ENCODE measurements at regions of chr20 and their contacts with region 1.

Region 1: DNA sequence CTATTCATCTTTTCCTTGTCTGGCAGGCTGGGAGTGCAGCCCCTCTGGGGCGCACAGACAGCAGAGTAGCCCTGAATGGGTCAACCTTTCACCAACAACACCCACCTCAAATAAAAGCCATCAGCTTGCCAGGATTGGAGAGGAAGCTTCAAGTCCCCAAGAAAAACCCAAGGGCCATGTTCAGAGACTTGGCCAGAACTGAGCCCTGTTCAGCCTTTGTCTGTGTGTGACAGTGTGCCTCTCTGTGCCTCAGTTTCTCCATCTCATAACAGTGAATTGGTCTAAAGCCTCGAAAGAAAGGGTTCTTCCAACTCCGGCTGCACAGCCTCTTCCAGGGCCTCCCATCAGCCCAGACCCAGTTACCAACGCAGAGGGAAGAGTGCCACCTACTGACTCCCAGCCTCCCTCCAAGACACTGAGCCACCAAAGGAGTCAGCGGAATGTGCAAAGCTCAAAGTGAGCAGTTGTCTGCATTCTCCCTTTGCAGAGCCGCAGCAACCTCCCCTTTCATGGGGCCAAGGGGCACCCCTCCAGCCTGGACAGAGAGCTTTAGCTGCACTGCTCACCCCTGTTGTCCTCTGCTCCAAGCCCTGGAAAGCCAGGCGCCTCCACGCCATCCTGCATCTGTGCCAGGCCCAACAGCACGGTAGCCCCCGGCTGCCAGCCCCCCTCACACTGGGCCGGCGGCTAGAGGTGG is 82.7 kb upstream of the TOP1 start:
- DNase-seq: peak; percentile 14 to 35 (median 34)
- H3K4me3 ChIP-seq: no peak overlapping the region
- H3K4me3 Mint-ChIP-seq: no peak overlapping the region
- H3K27ac ChIP-seq: no peak overlapping the region
- H3K27ac Mint-ChIP-seq: no peak overlapping the region
- H3K4me1 ChIP-seq: peaks cover 22 to 27% of the 10 kb centered on the region in 2 donors
- H3K4me1 Mint-ChIP-seq: peaks cover 34% of the 10 kb centered on the region
- H3K27me3 ChIP-seq: no peaks in the 10 kb centered on the region
- H3K27me3 Mint-ChIP-seq: peaks cover 0 to 4% (median 3%) of the 10 kb centered on the region in 3 donors
- CTCF ChIP-seq: peak; percentile 35

Region 2: DNA sequence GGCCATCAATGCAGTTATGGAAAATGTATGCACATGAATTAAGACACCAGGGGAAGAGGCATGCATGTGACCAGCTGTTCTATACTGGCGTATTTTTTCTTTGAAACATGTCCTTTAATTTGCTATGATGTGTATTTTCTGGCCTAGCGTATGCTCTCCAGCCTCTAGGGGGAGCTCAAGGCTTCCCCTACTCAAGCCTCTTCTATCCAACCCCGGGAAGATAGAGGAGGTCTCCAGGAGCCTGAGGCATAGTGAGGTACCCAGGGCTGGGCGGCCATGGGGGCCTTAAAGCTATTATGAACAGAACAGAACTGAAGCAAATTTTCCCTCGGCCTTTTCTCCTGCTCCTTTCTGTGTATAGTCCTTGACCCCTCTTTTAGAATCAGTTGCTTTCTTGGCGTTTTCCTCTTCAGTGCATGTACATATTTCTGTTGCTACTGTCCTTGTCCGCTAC is 785.8 kb before region 1 on chr20:
- intact Hi-C with region 1: loop called in 1 of 2 experiments (anchors 10 kb)
- DNase-seq: peak; percentile 49 to 65 (median 61)
- H3K4me3 ChIP-seq: no peak overlapping the region
- H3K4me3 Mint-ChIP-seq: no peak overlapping the region
- H3K27ac ChIP-seq: no peak overlapping the region
- H3K27ac Mint-ChIP-seq: no peak overlapping the region
- H3K4me1 ChIP-seq: no peaks in the 10 kb centered on the region
- H3K4me1 Mint-ChIP-seq: no peaks in the 10 kb centered on the region
- H3K27me3 ChIP-seq: peaks cover 5 to 6% of the 10 kb centered on the region in 2 donors
- H3K27me3 Mint-ChIP-seq: peaks cover 1 to 14% (median 2%) of the 10 kb centered on the region in 3 donors
- CTCF ChIP-seq: peak; percentile 90

Region 3: DNA sequence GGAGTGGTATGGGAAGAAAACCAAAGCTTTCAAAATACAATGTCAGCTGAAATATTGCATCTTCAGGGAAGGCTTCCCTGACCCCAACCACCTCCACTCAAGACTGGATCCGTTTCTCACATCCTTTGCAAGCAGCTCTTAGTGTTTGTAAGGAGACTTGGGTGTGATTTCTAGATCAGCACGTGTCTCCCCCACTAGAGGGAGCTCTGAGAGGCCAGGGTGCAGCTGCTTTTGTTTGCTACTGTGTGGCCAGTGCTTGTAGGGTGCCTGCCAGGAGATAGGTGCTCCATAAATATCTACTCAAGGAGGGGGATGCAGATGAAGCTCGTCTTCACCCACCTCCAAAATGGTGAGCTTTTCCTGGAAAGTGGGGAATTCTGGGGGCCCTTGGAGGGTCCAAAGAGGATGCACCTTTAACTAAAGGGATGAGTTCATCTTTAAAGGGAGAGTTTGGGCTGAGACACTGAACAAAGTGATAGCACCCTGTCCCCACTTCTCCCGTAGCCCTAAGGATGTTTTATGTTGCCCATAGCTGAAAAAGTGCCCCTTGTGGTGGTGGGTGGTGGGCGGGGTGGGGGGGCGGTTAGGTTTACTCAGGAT is 204.3 kb before region 1 on chr20:
- intact Hi-C with region 1: loop called in 1 of 2 experiments (anchors 10 kb)
- DNase-seq: peak; percentile 48 to 63 (median 59)
- H3K4me3 ChIP-seq: no peak overlapping the region
- H3K4me3 Mint-ChIP-seq: no peak overlapping the region
- H3K27ac ChIP-seq: no peak overlapping the region
- H3K27ac Mint-ChIP-seq: no peak overlapping the region
- H3K4me1 ChIP-seq: peaks cover 38 to 46% of the 10 kb centered on the region in 2 donors
- H3K4me1 Mint-ChIP-seq: peaks cover 52% of the 10 kb centered on the region
- H3K27me3 ChIP-seq: no peaks in the 10 kb centered on the region
- H3K27me3 Mint-ChIP-seq: peaks cover 0 to 13% (median 0%) of the 10 kb centered on the region in 3 donors
- CTCF ChIP-seq: peak; percentile 82

Region 4: GRCh38 chr20:40843251-40843650 is 102.7 kb before region 1 on chr20:
- intact Hi-C with region 1: no loop called
- DNase-seq: no peak
- H3K4me3 ChIP-seq: no peak overlapping the region
- H3K4me3 Mint-ChIP-seq: no peak overlapping the region
- H3K27ac ChIP-seq: no peak overlapping the region
- H3K27ac Mint-ChIP-seq: no peak overlapping the region
- H3K4me1 ChIP-seq: peaks cover 12 to 15% of the 10 kb centered on the region in 2 donors
- H3K4me1 Mint-ChIP-seq: peaks cover 18% of the 10 kb centered on the region
- H3K27me3 ChIP-seq: no peaks in the 10 kb centered on the region
- H3K27me3 Mint-ChIP-seq: peaks cover 0 to 13% (median 2%) of the 10 kb centered on the region in 3 donors
- CTCF ChIP-seq: no peak

Region 5: GRCh38 chr20:40970201-40970600 is 24.3 kb after region 1 on chr20:
- intact Hi-C with region 1: no loop called
- DNase-seq: no peak
- H3K4me3 ChIP-seq: no peak overlapping the region
- H3K4me3 Mint-ChIP-seq: peak overlapping the region in 1 of 2 donors; percentile 57
- H3K27ac ChIP-seq: no peak overlapping the region
- H3K27ac Mint-ChIP-seq: peak overlapping the region in 1 of 7 donors; percentile 61
- H3K4me1 ChIP-seq: peaks cover 7 to 10% of the 10 kb centered on the region in 2 donors
- H3K4me1 Mint-ChIP-seq: peaks cover 12% of the 10 kb centered on the region
- H3K27me3 ChIP-seq: peaks cover 6 to 12% of the 10 kb centered on the region in 2 donors
- H3K27me3 Mint-ChIP-seq: peaks cover 27 to 28% (median 27%) of the 10 kb centered on the region in 3 donors
- CTCF ChIP-seq: no peak

Region 6: GRCh38 chr20:40990542-40991120 is 44.7 kb after region 1 on chr20:
- intact Hi-C with region 1: no loop called
- DNase-seq: peak; percentile 69 to 81 (median 79)
- H3K4me3 ChIP-seq: peak overlapping the region in 1 of 3 experiments; percentile 61
- H3K4me3 Mint-ChIP-seq: peak overlapping the region; percentile 59 to 70
- H3K27ac ChIP-seq: peak overlapping the region; percentile 80 to 90
- H3K27ac Mint-ChIP-seq: peak overlapping the region; percentile 95 to 99 (median 98)
- H3K4me1 ChIP-seq: peaks cover 24% of the 10 kb centered on the region in 2 donors
- H3K4me1 Mint-ChIP-seq: peaks cover 27% of the 10 kb centered on the region
- H3K27me3 ChIP-seq: no peaks in the 10 kb centered on the region
- H3K27me3 Mint-ChIP-seq: peaks cover 0 to 3% (median 2%) of the 10 kb centered on the region in 3 donors
- CTCF ChIP-seq: peak; percentile 85

Region 7: DNA sequence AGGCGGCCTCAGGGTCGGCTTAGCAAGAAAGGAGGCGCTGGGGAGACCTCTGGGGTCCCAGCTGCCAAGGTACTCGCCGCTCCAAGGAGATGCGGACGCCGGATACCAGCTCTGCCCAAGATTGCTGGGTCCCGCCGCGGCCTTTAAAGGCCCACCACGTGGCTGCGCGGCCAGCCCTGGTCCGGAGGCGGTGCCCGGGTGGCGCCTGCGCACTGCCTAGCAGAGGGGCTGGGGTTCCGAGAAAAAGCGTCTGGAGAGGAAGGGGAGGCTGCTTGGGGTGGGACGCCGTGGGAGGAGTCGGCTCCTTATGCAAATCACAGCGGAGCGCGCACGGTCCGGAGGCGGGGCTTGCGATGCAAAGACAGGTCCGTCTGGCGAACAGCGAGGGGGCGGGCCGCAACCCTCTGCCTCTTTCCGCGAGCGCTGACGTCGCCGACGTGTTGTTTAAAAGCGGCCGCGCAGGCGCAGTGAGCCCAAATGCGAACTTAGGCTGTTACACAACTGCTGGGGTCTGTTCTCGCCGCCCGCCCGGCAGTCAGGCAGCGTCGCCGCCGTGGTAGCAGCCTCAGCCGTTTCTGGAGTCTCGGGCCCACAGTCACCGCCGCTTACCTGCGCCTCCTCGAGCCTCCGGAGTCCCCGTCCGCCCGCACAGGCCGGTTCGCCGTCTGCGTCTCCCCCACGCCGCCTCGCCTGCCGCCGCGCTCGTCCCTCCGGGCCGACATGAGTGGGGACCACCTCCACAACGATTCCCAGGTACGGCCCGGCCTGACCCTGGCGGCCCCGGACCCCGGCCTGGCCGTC is 82.6 kb after region 1 on chr20 and contains the start of gene TOP1:
- intact Hi-C with region 1: no loop called
- DNase-seq: peak; percentile 100
- H3K4me3 ChIP-seq: peak within 1 kb of the TSS; percentile 76 to 88 (median 83)
- H3K4me3 Mint-ChIP-seq: peak within 1 kb of the TSS; percentile 88 to 90
- H3K27ac ChIP-seq: peak within 1 kb of the TSS; percentile 77 to 95
- H3K27ac Mint-ChIP-seq: peak within 1 kb of the TSS; percentile 92 to 98 (median 97)
- H3K4me1 ChIP-seq: peaks cover 34 to 47% of the 10 kb centered on the region in 2 donors
- H3K4me1 Mint-ChIP-seq: peaks cover 44% of the 10 kb centered on the region
- H3K27me3 ChIP-seq: no peaks in the 10 kb centered on the region
- H3K27me3 Mint-ChIP-seq: peaks cover 0 to 2% (median 0%) of the 10 kb centered on the region in 3 donors
- CTCF ChIP-seq: no peak
- polyA plus RNA-seq, gene TOP1: 6.9 to 11.5 (median 11.5) TPM